ENCODE measurements at regions of chr12 and their contacts with region 1.

Region 1: GRCh38 chr12:18320036-18320617 is 58.8 kb downstream of the PIK3C2G start:
- DNase-seq: no peak
- H3K4me3 ChIP-seq: no peak overlapping the region
- H3K27me3 ChIP-seq: no peaks in the 10 kb centered on the region
- CTCF ChIP-seq: peak; percentile 44

Region 2: DNA sequence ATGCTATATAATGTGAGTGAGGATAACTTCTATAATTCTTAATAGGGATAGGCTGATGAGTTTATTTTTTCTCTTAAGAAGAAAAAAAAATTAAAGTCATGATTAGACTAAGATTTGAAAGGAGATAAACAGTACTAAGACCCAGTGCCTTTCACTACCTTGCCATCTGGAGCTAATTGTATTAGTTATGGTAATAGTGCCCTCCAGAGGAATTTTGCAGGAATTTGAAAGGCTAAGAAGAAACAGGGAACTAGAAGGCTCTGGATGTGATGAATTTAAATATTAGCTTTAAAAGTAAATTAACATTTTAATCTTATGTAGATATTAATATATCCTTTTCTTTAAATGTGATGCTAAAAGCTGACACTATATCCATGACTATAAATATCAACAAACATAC is 95.4 kb before region 1 on chr12:
- CTCF ChIA-PET with region 1: no interaction called
- POLR2A ChIA-PET with region 1: no interaction called
- DNase-seq: no peak
- H3K4me3 ChIP-seq: no peak overlapping the region
- H3K27me3 ChIP-seq: no peaks in the 10 kb centered on the region
- CTCF ChIP-seq: peak; percentile 21; the same call in 1 of the 2 replicates

Region 3: DNA sequence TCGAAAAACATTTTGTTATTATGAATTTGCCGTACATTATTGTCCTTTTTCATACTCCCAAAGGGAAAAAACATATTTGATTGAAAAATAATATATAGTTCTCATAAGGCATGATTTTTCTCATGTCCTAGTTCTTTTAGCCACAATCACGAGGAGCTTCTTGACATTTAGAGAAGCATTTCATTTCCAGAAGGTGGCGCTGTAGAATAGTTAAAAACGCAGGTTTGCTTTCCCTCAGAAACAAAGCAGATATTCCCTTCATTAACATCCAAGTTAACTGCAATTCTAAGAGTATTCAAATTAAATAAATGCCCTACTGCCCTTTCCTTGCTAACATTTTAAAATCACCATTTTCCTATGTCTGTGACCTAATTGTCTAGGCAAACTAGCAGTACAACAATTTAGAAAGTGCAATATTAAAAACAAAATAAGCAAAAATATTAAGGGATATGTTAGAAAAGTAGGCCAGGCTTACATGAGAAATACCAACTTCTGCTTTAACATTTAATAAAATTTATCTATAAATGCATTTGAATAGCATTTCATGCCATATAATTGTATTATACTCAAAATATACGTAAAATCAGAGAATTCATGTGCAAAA is 69.7 kb before region 1 on chr12:
- CTCF ChIA-PET with region 1: interaction called, 11 read pairs
- POLR2A ChIA-PET with region 1: no interaction called
- DNase-seq: no peak
- H3K4me3 ChIP-seq: no peak overlapping the region
- H3K27me3 ChIP-seq: no peaks in the 10 kb centered on the region
- CTCF ChIP-seq: peak; percentile 65

Region 4: GRCh38 chr12:18261253-18261652 is 58.9 kb before region 1 on chr12 and contains the start of gene PIK3C2G:
- CTCF ChIA-PET with region 1: no interaction called
- POLR2A ChIA-PET with region 1: no interaction called
- DNase-seq: no peak
- H3K4me3 ChIP-seq: no peak within 1 kb of the TSS
- H3K27me3 ChIP-seq: no peaks in the 10 kb centered on the region
- CTCF ChIP-seq: no peak
- polyA plus RNA-seq, gene PIK3C2G: not detected in 2 replicates

Region 5: GRCh38 chr12:18340786-18341185 is 20.7 kb after region 1 on chr12:
- CTCF ChIA-PET with region 1: interaction called, 11 read pairs
- POLR2A ChIA-PET with region 1: no interaction called
- DNase-seq: no peak
- H3K4me3 ChIP-seq: no peak overlapping the region
- H3K27me3 ChIP-seq: no peaks in the 10 kb centered on the region
- CTCF ChIP-seq: no peak

Measured in BJ (cell line).